MCF 10A (cell line): ENCODE measurements at regions of chr3 and their contacts with region 1.

Region 1: GRCh38 chr3:128879125-128879969 is at the start of gene ACAD9:
- DNase-seq: peak; percentile 98
- H3K4me3 Mint-ChIP-seq: peak within 1 kb of the TSS; percentile 82
- H3K27ac Mint-ChIP-seq: peak within 1 kb of the TSS; percentile 92
- H3K4me1 Mint-ChIP-seq: peaks cover 37% of the 10 kb centered on the region
- H3K27me3 Mint-ChIP-seq: no peaks in the 10 kb centered on the region
- CTCF ChIP-seq: no peak
- total RNA-seq, gene ACAD9: 43.1 and 44.7 TPM in 2 replicates

Region 2: GRCh38 chr3:128617557-128618397 is 261.6 kb before region 1 on chr3:
- CTCF ChIA-PET with region 1: no interaction called
- POLR2A ChIA-PET with region 1: interaction called, 3 read pairs
- intact Hi-C with region 1: loop called (anchors 10 kb)
- DNase-seq: peak; percentile 81
- H3K4me3 Mint-ChIP-seq: peak overlapping the region; percentile 90
- H3K27ac Mint-ChIP-seq: peak overlapping the region; percentile 96
- H3K4me1 Mint-ChIP-seq: peaks cover 18% of the 10 kb centered on the region
- H3K27me3 Mint-ChIP-seq: no peaks in the 10 kb centered on the region
- CTCF ChIP-seq: peak; percentile 64

Region 3: DNA sequence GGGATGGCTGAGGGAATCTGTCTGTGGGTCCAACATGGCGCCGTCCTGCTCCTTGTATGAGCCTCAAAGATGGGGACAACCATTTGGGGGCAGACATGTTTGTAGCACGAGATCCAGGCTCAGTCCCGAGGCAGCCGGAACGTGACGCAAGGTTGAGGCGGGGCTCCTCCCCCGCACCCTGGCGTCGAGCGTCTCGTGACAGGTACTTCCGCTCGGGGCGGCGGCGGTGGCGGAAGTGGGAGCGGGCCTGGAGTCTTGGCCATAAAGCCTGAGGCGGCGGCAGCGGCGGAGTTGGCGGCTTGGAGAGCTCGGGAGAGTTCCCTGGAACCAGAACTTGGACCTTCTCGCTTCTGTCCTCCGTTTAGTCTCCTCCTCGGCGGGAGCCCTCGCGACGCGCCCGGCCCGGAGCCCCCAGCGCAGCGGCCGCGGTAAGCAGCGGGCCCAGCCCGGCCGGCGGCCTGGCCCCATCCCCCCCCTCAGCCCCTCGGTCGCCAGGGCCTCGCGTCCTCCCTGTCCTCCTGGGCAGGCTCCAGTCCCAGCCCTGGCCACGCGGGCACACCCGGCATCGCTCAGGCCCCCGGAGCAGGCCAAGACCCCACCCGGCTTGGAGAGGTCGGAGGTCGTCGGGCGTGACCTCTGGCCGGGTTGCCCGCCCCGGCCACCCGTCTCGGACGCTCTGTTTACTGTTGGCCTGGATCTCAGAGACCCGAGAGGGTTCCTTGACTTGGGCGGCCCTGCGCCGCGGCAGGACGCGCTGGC is 153.2 kb before region 1 on chr3 and contains the start of gene RAB7A:
- CTCF ChIA-PET with region 1: no interaction called
- POLR2A ChIA-PET with region 1: interaction called, 44 read pairs
- intact Hi-C with region 1: no loop called
- DNase-seq: peak; percentile 97
- H3K4me3 Mint-ChIP-seq: peak within 1 kb of the TSS; percentile 78
- H3K27ac Mint-ChIP-seq: peak within 1 kb of the TSS; percentile 90
- H3K4me1 Mint-ChIP-seq: peaks cover 16% of the 10 kb centered on the region
- H3K27me3 Mint-ChIP-seq: no peaks in the 10 kb centered on the region
- CTCF ChIP-seq: no peak
- total RNA-seq, gene RAB7A: 172 and 221 TPM in 2 replicates

Region 4: GRCh38 chr3:128895843-128896697 is 16.7 kb after region 1 on chr3:
- CTCF ChIA-PET with region 1: no interaction called
- POLR2A ChIA-PET with region 1: interaction called, 13 read pairs
- intact Hi-C with region 1: no loop called
- DNase-seq: no peak
- H3K4me3 Mint-ChIP-seq: no peak overlapping the region
- H3K27ac Mint-ChIP-seq: peak overlapping the region; percentile 67
- H3K4me1 Mint-ChIP-seq: peaks cover 6% of the 10 kb centered on the region
- H3K27me3 Mint-ChIP-seq: no peaks in the 10 kb centered on the region
- CTCF ChIP-seq: no peak

Region 5: DNA sequence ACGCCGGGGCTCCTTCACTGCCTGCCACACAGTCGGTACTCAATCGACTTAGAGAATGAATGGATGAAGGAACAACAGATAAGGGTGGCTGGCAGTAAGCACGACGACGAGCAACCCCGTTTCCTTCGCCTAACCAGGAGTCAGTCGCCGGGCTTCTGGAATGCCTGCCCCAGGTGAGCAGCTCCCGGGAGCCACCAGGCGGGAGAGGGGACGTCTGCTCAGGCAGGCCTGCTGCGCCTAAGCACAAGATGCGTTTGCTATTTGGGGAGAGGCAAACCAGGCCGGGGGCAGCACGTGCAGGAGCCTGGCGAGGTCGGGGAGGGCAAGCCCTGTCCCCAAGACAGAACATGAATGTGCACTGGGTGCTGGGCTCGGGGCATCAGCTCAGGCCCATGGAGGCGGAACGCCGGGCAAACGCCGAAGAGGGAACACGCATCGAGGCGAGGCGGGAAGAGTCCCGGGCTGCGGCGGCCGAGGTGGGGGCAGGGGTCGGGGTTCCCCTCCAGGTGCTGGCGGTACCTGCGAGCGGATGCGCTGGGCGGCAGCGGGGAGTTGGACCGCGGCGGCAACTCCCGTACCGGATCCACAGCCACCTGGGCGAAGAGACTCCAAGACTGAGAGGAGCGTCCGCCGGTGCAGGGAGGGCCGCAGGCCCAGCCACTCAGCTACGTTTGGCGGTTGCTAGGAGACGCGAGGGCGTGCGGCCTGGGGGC is 114.3 kb after region 1 on chr3 and contains the start of gene CFAP92:
- CTCF ChIA-PET with region 1: no interaction called
- POLR2A ChIA-PET with region 1: no interaction called
- intact Hi-C with region 1: no loop called
- DNase-seq: peak; percentile 80
- H3K4me3 Mint-ChIP-seq: peak within 1 kb of the TSS; percentile 67
- H3K27ac Mint-ChIP-seq: peak within 1 kb of the TSS; percentile 13
- H3K4me1 Mint-ChIP-seq: no peaks in the 10 kb centered on the region
- H3K27me3 Mint-ChIP-seq: no peaks in the 10 kb centered on the region
- CTCF ChIP-seq: no peak
- total RNA-seq, gene CFAP92: 0.10 and 0.16 TPM in 2 replicates

Region 6: DNA sequence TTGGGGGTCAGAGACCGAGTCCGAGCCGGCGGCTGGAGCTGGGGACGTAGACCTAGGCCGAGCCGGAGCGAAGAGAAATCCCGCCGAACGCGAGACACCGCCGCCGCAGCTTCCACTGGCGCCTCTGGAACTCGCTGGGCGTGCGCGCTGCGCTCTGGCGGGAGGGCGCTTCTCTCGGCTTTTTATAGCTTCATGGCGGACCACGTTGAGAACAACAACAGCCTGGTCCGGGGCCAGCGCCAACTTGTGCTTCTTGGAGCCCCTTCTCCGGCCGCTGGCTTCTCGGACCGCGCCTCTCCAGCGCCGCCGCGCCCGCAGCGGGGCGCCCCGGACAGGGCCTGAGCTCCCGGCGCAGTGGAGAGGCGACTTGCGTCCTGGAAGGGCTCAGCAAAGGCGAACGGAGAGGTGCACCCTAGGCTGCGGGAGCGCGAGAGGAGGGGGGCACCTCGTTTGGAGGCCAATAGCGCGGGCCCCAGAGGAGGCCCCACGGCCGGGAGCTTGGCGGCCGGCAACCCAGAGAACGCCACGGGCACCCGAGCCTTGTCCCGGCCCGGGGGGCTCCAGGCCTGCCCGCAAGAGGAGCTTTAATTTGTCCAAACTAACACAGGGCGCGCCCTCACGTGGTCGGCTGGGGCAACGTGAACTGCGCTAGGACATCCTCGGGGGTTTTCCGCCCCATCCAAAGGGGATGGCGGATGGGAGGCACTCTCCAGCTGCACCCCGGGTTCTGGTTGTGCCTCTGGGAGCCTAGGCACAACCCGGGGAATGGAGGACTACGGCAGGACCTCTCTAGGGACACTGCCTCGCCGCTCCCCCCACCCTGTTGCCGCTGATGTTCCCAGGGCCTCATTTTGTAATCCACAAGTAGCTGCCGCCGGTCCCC is 437.0 kb after region 1 on chr3:
- CTCF ChIA-PET with region 1: no interaction called
- POLR2A ChIA-PET with region 1: interaction called, 11 read pairs
- intact Hi-C with region 1: no loop called
- DNase-seq: peak; percentile 82
- H3K4me3 Mint-ChIP-seq: peak overlapping the region; percentile 81
- H3K27ac Mint-ChIP-seq: peak overlapping the region; percentile 87
- H3K4me1 Mint-ChIP-seq: peaks cover 6% of the 10 kb centered on the region
- H3K27me3 Mint-ChIP-seq: no peaks in the 10 kb centered on the region
- CTCF ChIP-seq: peak; percentile 49